ENCODE measurements at regions of chr2 and their contacts with region 1.

Region 1: DNA sequence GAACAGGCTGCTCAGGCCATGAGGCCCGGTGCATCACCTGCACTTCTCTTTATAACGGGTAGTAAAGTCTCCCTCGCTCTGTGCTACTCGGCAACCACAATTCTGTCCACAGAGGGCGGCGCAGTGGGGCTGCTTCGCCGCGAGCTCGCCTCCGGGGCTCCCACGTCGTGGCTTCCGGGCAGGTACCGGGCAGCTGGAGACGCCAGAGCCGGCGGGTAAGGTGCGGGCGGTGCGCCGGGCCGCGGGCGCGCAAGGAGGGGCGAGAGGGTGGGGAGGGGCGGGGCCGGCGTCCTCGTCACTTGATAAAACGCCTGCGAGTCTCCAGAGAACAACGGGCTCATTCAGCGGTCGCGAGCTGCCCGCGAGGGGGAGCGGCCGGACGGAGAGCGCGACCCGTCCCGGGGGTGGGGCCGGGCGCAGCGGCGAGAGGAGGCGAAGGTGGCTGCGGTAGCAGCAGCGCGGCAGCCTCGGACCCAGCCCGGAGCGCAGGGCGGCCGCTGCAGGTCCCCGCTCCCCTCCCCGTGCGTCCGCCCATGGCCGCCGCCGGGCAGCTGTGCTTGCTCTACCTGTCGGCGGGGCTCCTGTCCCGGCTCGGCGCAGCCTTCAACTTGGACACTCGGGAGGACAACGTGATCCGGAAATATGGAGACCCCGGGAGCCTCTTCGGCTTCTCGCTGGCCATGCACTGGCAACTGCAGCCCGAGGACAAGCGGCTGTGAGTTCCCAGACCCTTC is at the start of gene ITGA6:
- DNase-seq: peak; percentile 94
- H3K4me3 Mint-ChIP-seq: peak within 1 kb of the TSS; percentile 95
- H3K27ac Mint-ChIP-seq: peak within 1 kb of the TSS; percentile 89
- H3K4me1 Mint-ChIP-seq: peaks cover 24% of the 10 kb centered on the region
- H3K27me3 Mint-ChIP-seq: no peaks in the 10 kb centered on the region
- CTCF ChIP-seq: no peak
- total RNA-seq, gene ITGA6: 242 and 270 TPM in 2 replicates

Region 2: DNA sequence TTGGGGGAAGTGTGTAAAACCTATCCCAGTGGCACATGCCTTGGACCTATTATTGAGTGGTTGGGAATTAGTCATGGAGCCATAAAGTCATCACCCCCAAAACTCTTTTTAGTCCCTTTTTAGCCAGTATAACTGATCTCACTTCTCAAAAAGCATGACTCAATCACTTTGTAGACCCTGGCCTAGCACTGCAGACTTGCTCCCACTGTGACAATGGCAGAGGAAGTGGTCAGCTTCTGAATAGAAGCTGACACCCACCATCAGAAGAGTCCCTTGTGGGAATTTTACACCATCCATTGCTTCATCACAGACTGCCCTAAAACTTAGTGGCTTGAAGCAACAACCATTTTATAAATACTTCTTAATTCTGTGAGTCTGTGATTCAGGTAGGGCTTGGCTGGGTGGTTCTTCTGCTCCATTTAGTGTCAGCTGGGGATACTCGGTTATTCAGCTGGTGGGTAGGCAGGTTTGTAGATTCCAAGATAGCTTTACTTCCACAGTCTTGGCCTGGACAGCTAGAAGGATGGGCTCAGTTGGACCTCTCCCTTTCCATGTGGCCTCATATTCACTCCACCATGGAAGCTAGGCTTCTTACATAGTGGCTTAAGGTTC is 10.9 kb before region 1 on chr2:
- CTCF ChIA-PET with region 1: no interaction called
- intact Hi-C with region 1: no loop called
- DNase-seq: no peak
- H3K4me3 Mint-ChIP-seq: no peak overlapping the region
- H3K27ac Mint-ChIP-seq: no peak overlapping the region
- H3K4me1 Mint-ChIP-seq: no peaks in the 10 kb centered on the region
- H3K27me3 Mint-ChIP-seq: no peaks in the 10 kb centered on the region
- CTCF ChIP-seq: no peak

Region 3: DNA sequence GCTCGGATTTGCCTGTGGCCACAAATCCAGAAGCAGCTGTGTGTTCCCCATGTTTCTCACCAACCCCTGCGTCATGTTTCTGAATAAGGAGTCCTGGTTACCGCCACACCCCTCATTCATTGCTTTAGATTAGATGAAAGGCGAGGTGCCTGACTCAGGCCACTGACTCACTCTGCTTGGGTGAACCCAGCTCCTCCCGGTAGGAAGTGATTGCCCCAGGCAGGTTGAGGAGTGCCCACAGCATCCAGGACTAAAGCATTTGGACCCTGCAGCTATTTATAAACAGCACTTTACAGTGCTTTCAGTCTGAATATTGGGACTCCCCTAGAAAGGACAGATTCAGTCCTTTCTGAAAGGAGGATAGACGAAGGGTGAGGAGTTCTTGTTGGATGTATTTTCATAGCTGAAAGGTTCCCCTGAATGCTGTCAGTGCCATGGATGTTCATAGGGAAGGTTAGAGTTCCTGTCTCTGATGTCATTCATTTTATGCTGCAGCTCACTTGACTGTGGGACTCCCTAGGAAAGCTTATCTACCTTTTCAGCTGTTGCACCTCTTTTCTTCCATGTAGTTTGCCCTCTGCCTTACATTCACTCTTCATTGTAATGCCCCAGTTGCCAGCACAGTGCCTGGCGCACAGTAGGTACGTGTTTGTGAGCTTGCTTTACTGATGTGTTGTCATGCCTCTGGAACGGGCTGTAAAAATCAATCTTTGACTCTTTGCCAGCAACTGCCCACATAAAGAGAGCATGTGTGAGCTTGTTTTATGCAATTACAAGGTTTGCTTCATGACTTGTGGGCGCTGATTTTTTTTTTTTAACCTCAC is 14.9 kb after region 1 on chr2:
- CTCF ChIA-PET with region 1: interaction called, 106 read pairs
- intact Hi-C with region 1: loop called (anchors 1 kb)
- DNase-seq: peak; percentile 93
- H3K4me3 Mint-ChIP-seq: peak overlapping the region; percentile 63
- H3K27ac Mint-ChIP-seq: peak overlapping the region; percentile 96
- H3K4me1 Mint-ChIP-seq: peaks cover 29% of the 10 kb centered on the region
- H3K27me3 Mint-ChIP-seq: no peaks in the 10 kb centered on the region
- CTCF ChIP-seq: no peak

Measured in Calu3 (cell line).